ENCODE measurements at regions of chr13 and their contacts with region 1.

Region 1: DNA sequence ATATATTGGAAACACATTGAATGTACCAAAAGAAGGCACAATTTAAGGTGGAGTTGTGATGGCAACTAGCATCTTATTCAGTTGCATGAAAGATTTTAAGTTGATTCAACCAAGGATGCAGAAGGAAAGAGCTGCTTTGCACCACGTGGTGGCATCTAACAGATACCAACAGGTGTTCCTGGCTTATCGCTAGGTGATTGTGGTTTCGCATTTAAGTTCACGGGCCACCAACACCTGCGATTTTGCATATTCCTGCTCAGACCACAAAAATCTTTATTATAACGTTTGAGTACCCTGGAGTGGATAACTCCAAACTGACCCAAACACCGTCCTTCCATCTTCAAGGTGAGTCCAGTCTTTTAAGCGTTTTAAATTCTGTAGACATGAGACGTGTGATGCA is 45.3 kb downstream of the RGCC start:
- DNase-seq: peak; percentile 99
- H3K4me3 ChIP-seq: peak overlapping the region; percentile 64
- H3K27ac ChIP-seq: peak overlapping the region; percentile 98
- H3K4me1 ChIP-seq: peaks cover 89% of the 10 kb centered on the region
- CTCF ChIP-seq: 0 out of 2 replicates have a peak, but pooled peaks have one; percentile 2

Region 2: GRCh38 chr13:41061075-41061913 is 441.4 kb before region 1 on chr13 and contains the start of gene WBP4:
- CTCF ChIA-PET with region 1: no interaction called
- POLR2A ChIA-PET with region 1: no interaction called
- intact Hi-C with region 1: loop called (anchors 5 kb)
- DNase-seq: peak; percentile 95
- H3K4me3 ChIP-seq: peak within 1 kb of the TSS; percentile 74
- H3K27ac ChIP-seq: peak within 1 kb of the TSS; percentile 83
- H3K4me1 ChIP-seq: peaks cover 48% of the 10 kb centered on the region
- CTCF ChIP-seq: no peak
- total RNA-seq, gene WBP4: 5.9 and 7.9 TPM in 2 replicates

Region 3: DNA sequence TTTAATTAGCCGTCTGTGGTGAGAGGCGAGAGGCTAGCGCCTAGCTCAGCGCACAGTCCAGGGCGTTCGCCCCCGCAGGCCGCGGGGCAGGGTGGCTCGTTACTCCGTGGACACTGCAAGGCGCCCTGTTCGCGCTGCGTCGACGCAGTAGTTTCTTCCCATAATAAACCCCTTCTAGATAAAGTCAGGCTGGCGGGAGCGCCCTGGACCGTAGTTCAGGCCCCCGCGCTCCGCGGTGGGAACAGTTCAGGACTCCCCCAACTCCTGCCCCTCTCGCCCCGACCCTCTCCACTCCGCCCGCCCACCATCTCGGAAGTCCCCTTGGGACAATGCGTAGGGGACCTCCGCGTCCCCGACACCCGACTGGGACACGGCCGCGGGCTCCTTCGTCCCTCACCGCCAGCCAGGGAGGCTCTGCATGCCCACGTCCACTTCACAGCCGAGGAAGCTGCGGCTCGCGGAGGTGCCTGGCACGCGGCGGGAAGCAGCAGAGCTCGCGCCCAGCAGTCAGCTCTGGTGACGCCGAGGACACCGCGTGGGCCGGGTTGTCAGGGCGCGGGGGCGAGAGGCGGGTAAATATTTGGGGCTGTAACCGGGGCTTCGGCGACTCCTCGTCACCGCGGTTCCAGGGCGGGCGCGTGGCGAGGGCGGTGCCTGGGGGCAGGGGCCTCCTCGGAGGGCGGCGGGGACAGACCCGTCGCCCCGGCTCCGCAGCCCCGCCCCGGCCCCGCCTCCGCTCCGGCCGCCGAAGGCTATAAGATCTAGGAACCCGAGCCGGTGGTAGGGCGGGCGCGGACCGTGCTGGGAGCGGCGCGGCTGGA is 45.7 kb before region 1 on chr13 and contains the start of gene RGCC:
- CTCF ChIA-PET with region 1: interaction called, 24 read pairs
- POLR2A ChIA-PET with region 1: interaction called, 82 read pairs
- intact Hi-C with region 1: loop called (anchors 1 kb)
- DNase-seq: peak; percentile 80
- H3K4me3 ChIP-seq: peak within 1 kb of the TSS; percentile 85
- H3K27ac ChIP-seq: peak within 1 kb of the TSS; percentile 95
- H3K4me1 ChIP-seq: peaks cover 26% of the 10 kb centered on the region
- CTCF ChIP-seq: no peak
- total RNA-seq, gene RGCC: 219 and 274 TPM in 2 replicates

Region 4: GRCh38 chr13:41492404-41493260 is 10.0 kb before region 1 on chr13:
- CTCF ChIA-PET with region 1: interaction called, 7 read pairs
- POLR2A ChIA-PET with region 1: interaction called, 16 read pairs
- intact Hi-C with region 1: no loop called
- DNase-seq: peak; percentile 78
- H3K4me3 ChIP-seq: peak overlapping the region; percentile 35
- H3K27ac ChIP-seq: peak overlapping the region; percentile 88
- H3K4me1 ChIP-seq: peaks cover 79% of the 10 kb centered on the region
- CTCF ChIP-seq: no peak

Region 5: GRCh38 chr13:41520016-41520659 is 17.5 kb after region 1 on chr13:
- CTCF ChIA-PET with region 1: no interaction called
- POLR2A ChIA-PET with region 1: no interaction called
- intact Hi-C with region 1: no loop called
- DNase-seq: no peak
- H3K4me3 ChIP-seq: no peak overlapping the region
- H3K27ac ChIP-seq: no peak overlapping the region
- H3K4me1 ChIP-seq: peaks cover 19% of the 10 kb centered on the region
- CTCF ChIP-seq: no peak

Region 6: GRCh38 chr13:41590643-41591042 is 88.0 kb after region 1 on chr13:
- CTCF ChIA-PET with region 1: interaction called, 3 read pairs
- POLR2A ChIA-PET with region 1: interaction called, 3 read pairs
- intact Hi-C with region 1: loop called (anchors 1 kb)
- DNase-seq: peak; percentile 93
- H3K4me3 ChIP-seq: peak overlapping the region; percentile 39
- H3K27ac ChIP-seq: peak overlapping the region; percentile 85
- H3K4me1 ChIP-seq: peaks cover 41% of the 10 kb centered on the region
- CTCF ChIP-seq: no peak

Region 7: DNA sequence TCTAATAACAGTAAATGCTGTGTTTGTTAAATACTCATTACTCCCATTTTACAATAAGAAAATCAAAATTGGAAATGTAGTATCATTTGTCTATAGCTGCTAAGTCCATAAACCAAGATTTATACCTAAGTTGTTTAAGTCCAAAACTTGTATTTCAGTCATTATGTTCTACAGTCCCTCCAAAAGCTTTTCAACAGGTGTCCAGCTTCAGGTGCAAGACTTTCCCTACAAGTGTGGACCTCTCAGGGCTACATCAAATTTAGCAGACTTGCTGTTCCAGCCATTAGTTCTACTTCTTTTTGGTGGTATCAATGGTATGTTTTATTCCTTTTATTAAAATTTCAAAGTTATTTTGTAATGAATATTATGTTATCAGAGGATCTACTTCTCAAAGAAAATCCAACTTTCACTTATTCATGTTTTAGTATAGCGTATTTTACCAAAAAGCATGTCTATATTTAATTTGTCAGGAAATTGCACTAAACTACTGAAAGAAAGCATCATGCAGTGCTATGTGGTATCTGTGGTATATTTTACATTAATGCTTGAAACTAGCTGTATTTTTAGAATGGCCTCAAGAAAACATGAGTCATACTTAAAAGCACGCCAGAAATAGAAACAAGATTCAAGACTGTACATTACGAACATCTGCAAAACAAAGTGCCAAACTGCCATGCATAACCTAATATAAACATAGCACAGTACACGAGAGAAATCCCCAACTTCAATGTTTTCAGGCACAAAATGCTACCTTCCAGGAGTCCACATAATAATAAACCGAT is 413.7 kb after region 1 on chr13:
- CTCF ChIA-PET with region 1: no interaction called
- POLR2A ChIA-PET with region 1: no interaction called
- intact Hi-C with region 1: loop called (anchors 10 kb)
- DNase-seq: peak; percentile 94
- H3K4me3 ChIP-seq: peak overlapping the region; percentile 42
- H3K27ac ChIP-seq: peak overlapping the region; percentile 87
- H3K4me1 ChIP-seq: peaks cover 60% of the 10 kb centered on the region
- CTCF ChIP-seq: no peak

Region 8: GRCh38 chr13:42660333-42660965 is 1157.8 kb after region 1 on chr13:
- CTCF ChIA-PET with region 1: no interaction called
- POLR2A ChIA-PET with region 1: no interaction called
- intact Hi-C with region 1: no loop called
- DNase-seq: peak; percentile 1
- H3K4me3 ChIP-seq: no peak overlapping the region
- H3K27ac ChIP-seq: no peak overlapping the region
- H3K4me1 ChIP-seq: no peaks in the 10 kb centered on the region
- CTCF ChIP-seq: peak; percentile 45; the same call in 1 of the 2 replicates

Measured in OCI-LY7 (cell line).